Right cardiac atrium (tissue), 5 donors: ENCODE measurements at regions of chr11 and their contacts with region 1.

Region 1: DNA sequence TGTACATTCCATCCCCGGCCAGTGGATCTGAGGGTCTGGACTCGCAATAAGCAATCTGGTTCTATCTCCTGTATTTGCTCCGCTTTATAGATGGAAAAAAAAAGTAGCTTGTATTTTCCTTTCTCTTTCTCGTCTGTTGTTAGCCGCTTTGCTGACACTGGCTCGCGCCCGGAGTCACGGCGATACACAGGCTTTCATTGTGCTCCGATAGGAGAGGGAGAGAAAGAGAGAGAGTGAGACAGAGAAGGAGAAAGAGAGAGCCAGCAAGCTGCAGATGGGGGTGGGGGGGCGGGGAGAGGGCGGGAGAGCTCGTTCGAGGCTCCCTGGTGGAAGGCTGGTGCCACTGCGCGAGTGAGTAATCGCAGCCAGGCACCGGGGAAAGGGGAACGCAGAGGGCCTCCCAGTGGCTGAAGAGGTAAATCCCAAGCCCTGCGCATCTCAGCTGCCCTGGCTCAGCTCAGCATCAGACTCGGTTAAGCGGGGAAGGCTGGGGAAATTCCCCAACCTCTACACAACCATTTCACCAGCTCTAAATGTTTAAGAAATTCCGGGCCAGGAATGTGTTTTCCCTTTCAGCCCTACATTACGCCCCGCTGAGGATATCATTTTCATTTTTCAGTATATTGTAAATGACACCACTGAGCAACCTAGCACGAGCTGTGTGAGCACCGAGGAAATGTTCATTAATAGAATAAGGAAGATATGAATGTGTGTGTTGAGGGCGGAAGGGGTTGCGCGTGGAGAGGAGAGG is at the start of gene MAML2:
- DNase-seq: peak; percentile 93 to 96 (median 96)
- ATAC-seq: peak; percentile 96 to 97
- H3K4me3 ChIP-seq: peak within 1 kb of the TSS; percentile 93
- H3K27ac ChIP-seq: peak within 1 kb of the TSS; percentile 91
- H3K4me1 ChIP-seq: peaks cover 12% of the 10 kb centered on the region
- H3K27me3 ChIP-seq: no peaks in the 10 kb centered on the region
- total RNA-seq, gene MAML2: 7.0 to 9.9 (median 7.9) TPM

Region 2: GRCh38 chr11:96054870-96055705 is 288.0 kb before region 1 on chr11:
- intact Hi-C with region 1: loop called (anchors 1 to 5 kb)
- DNase-seq: no peak
- ATAC-seq: peak in 1 of 2 donors; percentile 60
- H3K4me3 ChIP-seq: no peak overlapping the region
- H3K27ac ChIP-seq: no peak overlapping the region
- H3K4me1 ChIP-seq: peaks cover 5% of the 10 kb centered on the region
- H3K27me3 ChIP-seq: no peaks in the 10 kb centered on the region

Region 3: GRCh38 chr11:96228473-96228891 is 114.7 kb before region 1 on chr11:
- intact Hi-C with region 1: loop called in 1 of 4 experiments (anchors 10 kb)
- DNase-seq: peak; percentile 79 to 90 (median 80)
- ATAC-seq: peak; percentile 75 to 90
- H3K4me3 ChIP-seq: no peak overlapping the region
- H3K27ac ChIP-seq: peak overlapping the region; percentile 69
- H3K4me1 ChIP-seq: peaks cover 16% of the 10 kb centered on the region
- H3K27me3 ChIP-seq: no peaks in the 10 kb centered on the region

Region 4: DNA sequence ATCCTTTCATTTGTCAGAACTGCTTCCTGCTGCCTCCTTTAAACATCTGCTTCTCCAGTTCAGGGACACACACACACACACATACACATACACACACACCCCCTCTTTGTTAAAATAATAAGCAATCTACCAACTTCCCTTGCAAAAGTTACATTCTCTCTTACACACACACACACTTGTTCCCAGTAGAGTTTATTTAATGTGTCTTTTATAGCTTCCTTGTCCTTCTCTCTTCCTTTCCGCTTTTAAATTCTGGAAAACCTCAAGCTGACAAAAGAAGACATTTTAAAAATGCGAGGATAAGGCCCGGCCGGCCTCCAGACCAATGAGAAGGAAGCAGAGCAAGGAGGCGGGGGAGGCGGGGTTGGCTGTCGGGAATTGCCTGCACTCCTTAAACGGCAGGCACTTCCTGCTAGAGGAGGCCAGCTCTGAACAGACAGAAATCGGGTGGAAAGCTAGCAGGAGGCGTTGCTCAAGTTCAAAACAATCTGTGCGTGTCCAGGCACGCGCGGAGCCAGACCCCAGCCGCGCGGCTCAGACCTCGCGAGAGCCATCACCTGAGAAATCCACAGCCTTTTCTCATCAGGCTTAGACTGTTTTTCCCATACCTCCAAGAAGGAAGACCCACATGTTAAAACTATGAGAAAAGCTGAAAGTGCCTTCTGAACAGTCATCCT is 100.0 kb before region 1 on chr11:
- intact Hi-C with region 1: loop called in 1 of 4 experiments (anchors 5 kb)
- DNase-seq: peak; percentile 94 to 98 (median 97)
- ATAC-seq: peak; percentile 99 to 100
- H3K4me3 ChIP-seq: peak overlapping the region; percentile 23
- H3K27ac ChIP-seq: peak overlapping the region; percentile 65
- H3K4me1 ChIP-seq: peaks cover 4% of the 10 kb centered on the region
- H3K27me3 ChIP-seq: no peaks in the 10 kb centered on the region

Region 5: DNA sequence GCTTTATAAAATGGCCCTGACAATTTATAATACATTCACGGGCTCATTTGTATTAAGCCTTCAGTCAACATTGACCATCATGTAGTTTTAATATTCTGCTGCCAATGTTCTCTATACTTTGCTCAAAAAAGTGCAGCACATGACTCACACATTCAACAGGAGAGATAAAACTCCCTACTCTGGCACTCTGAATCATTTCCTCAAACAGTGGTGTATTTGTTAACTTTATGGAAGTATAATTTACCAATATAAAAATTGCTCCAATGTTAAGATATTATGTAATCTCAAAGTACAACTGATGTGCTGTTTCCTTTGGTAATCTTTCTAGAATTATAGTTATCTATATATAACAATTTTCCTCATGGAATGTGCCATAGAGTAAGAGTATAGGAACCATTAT is 40.1 kb before region 1 on chr11:
- intact Hi-C with region 1: loop called in 1 of 4 experiments (anchors 5 kb)
- DNase-seq: no peak
- ATAC-seq: peak; percentile 48 to 59
- H3K4me3 ChIP-seq: no peak overlapping the region
- H3K27ac ChIP-seq: no peak overlapping the region
- H3K4me1 ChIP-seq: peaks cover 19% of the 10 kb centered on the region
- H3K27me3 ChIP-seq: no peaks in the 10 kb centered on the region